ENCODE measurements at regions of chr2 and their contacts with region 1.

Region 1: DNA sequence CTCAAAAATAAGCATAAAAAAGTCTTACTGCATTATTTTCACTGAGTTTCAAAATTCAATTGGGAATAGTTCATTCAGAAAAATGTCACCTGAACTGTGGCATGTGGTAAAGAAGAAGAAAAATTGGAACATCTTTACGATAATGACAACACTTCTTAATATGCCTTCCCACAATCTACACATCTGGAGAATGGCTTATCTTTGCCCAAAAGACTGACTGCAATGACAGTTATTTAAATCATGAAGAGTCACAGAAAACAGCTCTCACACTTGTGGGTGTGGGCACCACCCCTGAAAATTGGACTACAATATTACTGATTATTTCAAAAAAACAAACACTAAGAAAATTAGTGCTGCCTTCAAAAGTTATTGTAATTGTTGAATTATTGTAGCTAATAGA is 152.3 kb downstream of the USP34 start:
- DNase-seq: no peak
- ATAC-seq: no peak
- H3K4me3 ChIP-seq: no peak overlapping the region
- H3K27ac ChIP-seq: no peak overlapping the region
- H3K4me1 ChIP-seq: no peaks in the 10 kb centered on the region
- H3K27me3 ChIP-seq: no peaks in the 10 kb centered on the region
- CTCF ChIP-seq: no peak
- POLR2A ChIP-seq: no peak
- RAD21 ChIP-seq: no peak

Region 2: DNA sequence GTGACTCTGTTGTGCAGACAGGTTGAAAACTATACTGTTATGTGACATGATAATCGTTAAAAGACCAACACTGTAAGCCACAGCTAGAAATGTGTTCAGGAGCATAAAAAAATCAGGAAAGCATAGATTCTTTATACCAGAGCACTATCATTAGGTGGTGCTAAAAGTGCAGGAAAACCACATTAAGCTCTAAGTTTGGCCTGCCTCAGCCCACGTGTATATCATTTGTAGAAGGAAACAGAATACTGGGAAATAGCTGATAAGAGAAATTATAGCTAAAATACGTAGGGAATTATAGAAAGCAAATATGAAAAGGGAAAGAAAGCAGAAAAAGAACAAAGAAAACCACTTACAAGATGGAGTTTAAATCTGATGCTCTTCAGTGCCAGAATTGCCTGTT is 183.0 kb before region 1 on chr2:
- CTCF ChIA-PET with region 1: no interaction called
- POLR2A ChIA-PET with region 1: no interaction called
- RAD21 ChIA-PET with region 1: no interaction called
- intact Hi-C with region 1: no loop called
- DNase-seq: peak; percentile 13
- ATAC-seq: peak; percentile 70
- H3K4me3 ChIP-seq: no peak overlapping the region
- H3K27ac ChIP-seq: no peak overlapping the region
- H3K4me1 ChIP-seq: no peaks in the 10 kb centered on the region
- H3K27me3 ChIP-seq: no peaks in the 10 kb centered on the region
- CTCF ChIP-seq: peak; percentile 23 to 63 (median 28); a peak in 4 of 6 replicates
- POLR2A ChIP-seq: no peak
- RAD21 ChIP-seq: peak; percentile 84

Region 3: GRCh38 chr2:61295981-61296380 is 22.6 kb before region 1 on chr2:
- CTCF ChIA-PET with region 1: no interaction called
- POLR2A ChIA-PET with region 1: no interaction called
- RAD21 ChIA-PET with region 1: no interaction called
- intact Hi-C with region 1: no loop called
- DNase-seq: no peak
- ATAC-seq: no peak
- H3K4me3 ChIP-seq: no peak overlapping the region
- H3K27ac ChIP-seq: no peak overlapping the region
- H3K4me1 ChIP-seq: no peaks in the 10 kb centered on the region
- H3K27me3 ChIP-seq: no peaks in the 10 kb centered on the region
- CTCF ChIP-seq: no peak
- POLR2A ChIP-seq: no peak
- RAD21 ChIP-seq: no peak

Region 4: GRCh38 chr2:61379521-61379920 is 61.0 kb after region 1 on chr2:
- CTCF ChIA-PET with region 1: no interaction called
- POLR2A ChIA-PET with region 1: no interaction called
- RAD21 ChIA-PET with region 1: no interaction called
- intact Hi-C with region 1: loop called (anchors 5 kb)
- DNase-seq: no peak
- ATAC-seq: no peak
- H3K4me3 ChIP-seq: no peak overlapping the region
- H3K27ac ChIP-seq: no peak overlapping the region
- H3K4me1 ChIP-seq: no peaks in the 10 kb centered on the region
- H3K27me3 ChIP-seq: no peaks in the 10 kb centered on the region
- CTCF ChIP-seq: no peak
- POLR2A ChIP-seq: no peak
- RAD21 ChIP-seq: no peak

Measured in HCT116 (cell line).